Posterior cingulate gyrus (tissue), 11 donors: ENCODE measurements at regions of chr13 and their contacts with region 1.

Region 1: GRCh38 chr13:114226699-114227323 is 7.9 kb upstream of the CDC16 start:
- DNase-seq: peak; percentile 63 to 97 (median 88)

Region 2: GRCh38 chr13:113951246-113951999 is 275.4 kb before region 1 on chr13:
- intact Hi-C with region 1: loop called (anchors 1 kb)
- DNase-seq: peak; percentile 59 to 96 (median 74)

Region 3: DNA sequence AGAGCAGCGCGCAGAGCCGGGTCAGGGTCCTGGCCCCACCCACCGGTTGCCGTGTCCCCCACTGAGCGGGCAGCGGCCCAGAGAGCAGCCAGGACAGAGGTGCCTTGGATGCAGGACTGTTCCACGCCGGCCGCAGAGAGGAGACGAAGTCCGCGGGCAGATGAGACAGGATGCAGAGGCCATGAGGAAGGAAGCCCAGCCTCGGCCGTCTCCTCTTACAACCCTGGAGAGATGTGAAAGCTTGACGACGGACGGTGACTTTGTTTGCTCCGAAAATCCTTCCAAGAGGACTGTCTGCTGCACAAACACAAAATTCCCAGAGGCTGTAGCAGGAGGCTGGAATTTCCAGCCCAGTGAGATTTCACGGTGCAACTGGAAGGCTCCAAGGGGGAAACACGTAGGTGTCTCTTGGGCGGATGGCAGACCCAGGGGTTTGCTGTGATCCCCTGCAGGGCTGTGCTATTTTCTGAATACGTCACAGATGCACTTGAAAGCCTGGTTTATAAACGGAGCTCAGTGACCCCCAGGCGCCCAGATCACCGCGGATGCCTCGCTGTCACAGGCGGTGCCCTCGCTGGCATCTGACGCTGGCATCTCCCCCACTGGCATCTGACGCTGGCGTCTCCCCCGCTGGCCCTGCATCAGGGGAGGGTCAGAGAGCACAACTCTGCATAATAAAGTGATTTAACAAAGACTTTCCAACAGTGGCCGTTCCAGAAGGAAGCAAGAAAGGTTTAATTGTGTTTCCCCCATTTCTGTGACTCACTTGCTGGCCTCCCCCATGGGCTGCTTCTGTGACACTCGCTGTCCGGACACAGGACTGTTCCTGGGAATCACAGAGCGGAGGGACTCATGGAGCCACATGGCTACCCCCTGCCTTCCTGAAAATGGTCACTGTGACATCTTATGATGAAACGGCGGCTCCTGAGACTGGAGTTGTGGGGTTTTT is 191.0 kb before region 1 on chr13:
- intact Hi-C with region 1: loop called (anchors 5 kb)
- DNase-seq: peak; percentile 63 to 97 (median 82)

Region 4: GRCh38 chr13:114078461-114079451 is 148.1 kb before region 1 on chr13:
- intact Hi-C with region 1: no loop called
- DNase-seq: peak in 3 of 10 donors; percentile 64 to 78 (median 74)

Region 5: DNA sequence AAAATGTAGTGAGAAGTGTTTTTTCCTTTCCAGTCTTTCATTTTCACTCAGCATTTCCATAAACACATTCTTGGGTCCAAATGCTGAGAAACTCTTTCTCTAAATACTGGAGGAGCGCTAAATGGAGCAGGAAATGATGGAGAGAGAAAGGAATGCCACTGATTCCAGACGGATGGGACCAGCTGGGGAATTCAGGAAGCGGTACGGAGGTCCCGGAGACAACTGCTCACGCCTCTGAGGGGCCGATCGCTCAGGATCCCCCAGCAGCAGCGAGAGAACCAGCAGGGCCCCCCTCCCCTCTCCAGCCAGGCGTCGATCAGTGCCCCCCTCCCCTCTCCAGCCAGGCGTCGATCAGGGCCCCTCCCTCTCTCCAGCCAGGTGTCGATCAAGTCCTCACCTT is 107.6 kb before region 1 on chr13:
- intact Hi-C with region 1: no loop called
- DNase-seq: peak in 3 of 10 donors; percentile 43 to 50 (median 50)

Region 6: DNA sequence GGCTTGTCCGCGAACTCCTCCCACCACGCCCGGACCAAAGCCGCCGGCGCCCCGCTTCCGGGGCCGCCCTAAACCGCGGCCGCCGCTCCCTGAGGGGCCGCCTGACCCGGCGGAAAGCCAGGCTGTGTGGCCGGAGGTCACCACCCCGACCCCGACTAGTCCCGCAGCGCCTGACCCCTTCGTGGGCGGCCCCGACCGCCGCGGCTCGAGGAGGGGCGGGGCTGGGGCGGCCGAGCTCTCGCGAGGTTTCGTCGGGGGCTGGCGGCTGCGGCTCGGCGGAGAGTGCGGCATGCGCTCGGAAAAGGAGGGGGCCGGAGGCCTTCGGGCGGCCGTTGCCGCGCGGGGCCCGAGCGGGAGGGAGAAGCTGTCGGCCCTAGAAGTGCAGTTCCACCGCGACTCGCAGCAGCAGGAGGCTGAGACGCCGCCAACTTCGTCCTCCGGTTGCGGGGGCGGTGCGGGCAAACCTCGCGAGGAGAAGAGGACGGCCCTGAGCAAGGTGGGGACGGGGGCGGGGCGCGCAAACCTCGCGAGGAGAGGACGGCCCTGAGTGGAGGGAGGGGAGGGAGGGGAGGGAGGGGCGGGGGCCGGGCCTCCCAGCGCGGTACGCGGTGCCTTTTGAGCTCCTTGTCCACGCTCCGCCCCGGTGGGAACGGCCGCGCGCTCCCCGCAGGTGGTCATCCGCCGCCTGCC is 54.7 kb after region 1 on chr13 and contains the start of gene UPF3A:
- intact Hi-C with region 1: no loop called
- DNase-seq: peak; percentile 79 to 98 (median 86)

Region 7: DNA sequence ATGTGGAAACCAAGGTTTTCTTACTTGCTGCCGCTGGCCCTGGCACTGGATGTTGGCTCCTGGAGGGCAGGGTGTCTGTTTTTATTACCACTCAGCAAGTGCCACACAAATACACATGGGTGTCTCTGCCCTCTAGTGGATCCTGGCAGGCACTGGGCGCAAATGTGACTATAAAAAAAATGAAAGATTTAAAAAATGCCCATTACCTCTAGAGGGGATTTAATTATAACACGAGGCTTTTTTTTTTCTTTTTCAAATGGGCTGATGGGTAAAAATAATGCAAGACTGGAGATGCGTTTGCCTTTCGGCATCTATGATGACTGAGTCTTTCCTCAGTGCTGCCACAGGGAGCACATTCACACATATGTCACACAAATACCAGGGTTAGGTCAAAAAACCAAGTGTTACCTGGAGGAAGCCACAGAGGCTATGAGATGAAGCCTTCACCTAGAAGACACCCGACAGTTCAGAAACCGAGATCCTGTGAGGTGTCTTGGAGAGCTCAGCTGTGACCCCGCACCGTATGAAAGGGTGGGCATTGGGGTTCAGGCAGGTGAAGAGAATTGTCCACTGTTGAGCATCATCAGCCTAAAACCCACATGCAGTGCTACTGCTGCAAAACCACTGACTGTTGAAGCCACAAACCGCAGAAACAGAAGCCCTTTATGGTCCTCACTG is 113.2 kb after region 1 on chr13:
- intact Hi-C with region 1: no loop called
- DNase-seq: peak in 1 of 10 donors; percentile 72